OCI-LY7 (cell line): ENCODE measurements at regions of chr6 and their contacts with region 1.

Region 1: DNA sequence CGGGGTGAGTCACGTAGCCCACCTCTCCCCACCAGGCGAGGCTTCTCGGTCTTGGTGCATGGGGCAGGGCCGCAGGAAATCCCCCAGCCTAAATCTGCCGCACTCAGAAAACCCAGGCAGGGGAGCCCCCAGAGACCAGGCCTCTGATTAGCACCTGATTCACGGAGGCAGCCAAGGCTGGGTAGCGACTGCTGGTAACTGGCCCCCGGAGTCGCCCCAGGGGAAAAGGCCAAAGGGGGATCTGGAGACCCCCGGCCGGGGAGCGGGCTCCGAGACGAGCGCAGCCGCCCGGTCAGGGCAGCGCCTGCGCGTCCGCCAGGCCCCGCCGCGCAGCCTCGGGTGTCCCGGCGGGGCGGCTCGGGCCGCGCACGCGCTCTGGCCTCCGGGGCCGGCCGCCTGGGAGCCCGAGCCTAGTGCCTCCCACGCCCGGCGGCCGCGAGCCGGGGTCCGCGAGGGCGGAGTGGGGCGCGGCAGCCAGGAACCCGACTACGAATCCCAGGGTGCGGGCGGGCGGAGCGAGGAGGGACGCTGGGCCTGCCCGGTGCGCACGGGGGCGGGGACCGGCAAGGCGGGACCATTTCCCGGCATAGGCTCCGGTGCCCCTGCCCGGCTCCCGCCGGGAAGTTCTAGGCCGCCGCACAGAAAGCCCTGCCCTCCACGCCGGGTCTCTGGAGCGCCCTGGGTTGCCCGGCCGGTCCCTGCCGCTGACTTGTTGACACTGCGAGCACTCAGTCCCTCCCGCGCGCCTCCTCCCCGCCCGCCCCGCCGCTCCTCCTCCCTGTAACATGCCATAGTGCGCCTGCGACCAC is at the start of gene DUSP22:
- DNase-seq: peak; percentile 87
- H3K4me3 ChIP-seq: peak within 1 kb of the TSS; percentile 80
- H3K27ac ChIP-seq: peak within 1 kb of the TSS; percentile 88
- H3K4me1 ChIP-seq: peaks cover 65% of the 10 kb centered on the region
- CTCF ChIP-seq: no peak
- total RNA-seq, gene DUSP22: 133 and 149 TPM in 2 replicates

Region 2: GRCh38 chr6:188821-189655 is 102.9 kb before region 1 on chr6:
- CTCF ChIA-PET with region 1: no interaction called
- POLR2A ChIA-PET with region 1: interaction called, 9 read pairs
- intact Hi-C with region 1: loop called (anchors 2 kb)
- DNase-seq: peak; percentile 89
- H3K4me3 ChIP-seq: no peak overlapping the region
- H3K27ac ChIP-seq: peak overlapping the region; percentile 24
- H3K4me1 ChIP-seq: peaks cover 87% of the 10 kb centered on the region
- CTCF ChIP-seq: peak; percentile 98

Region 3: DNA sequence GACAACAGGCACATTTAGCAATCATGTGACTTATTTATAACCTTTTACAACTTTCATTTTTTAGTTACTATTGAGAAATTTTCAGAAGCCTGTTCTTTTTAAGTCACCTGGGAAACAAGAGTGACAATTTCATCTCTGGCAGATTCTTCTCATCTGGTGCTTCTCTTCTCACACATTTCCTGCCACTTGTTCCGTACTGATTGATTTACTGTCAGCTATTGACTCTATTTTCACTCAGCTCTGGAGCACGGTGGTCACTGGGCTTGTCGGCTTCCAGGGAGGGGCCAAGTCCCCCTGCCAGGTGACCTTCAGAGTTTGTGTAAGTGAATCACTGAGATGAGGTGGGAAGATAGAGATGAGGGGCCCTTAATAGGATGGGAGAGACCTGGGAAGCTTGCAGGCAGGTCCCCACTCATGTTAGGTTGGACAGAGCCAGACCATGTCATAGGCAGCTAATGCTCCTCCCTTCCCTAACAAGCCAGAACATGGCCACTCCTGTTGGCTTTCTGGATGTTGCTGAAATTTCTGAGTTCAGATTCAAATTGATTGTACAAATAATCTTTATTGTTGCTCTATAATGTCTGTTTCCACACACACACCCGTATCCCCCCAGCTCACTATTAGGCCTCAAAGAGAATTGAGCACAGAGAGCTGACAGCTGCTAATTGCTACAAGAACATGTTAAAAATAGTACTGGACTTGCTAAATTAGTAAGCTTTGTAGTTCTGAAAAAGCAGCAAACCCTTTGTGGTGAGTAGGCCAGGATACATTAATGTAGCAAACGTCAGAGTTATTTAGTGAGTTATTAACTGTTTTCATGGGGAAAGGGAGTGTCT is 13.7 kb after region 1 on chr6:
- CTCF ChIA-PET with region 1: interaction called, 10 read pairs
- POLR2A ChIA-PET with region 1: interaction called, 98 read pairs
- intact Hi-C with region 1: no loop called
- DNase-seq: peak; percentile 74
- H3K4me3 ChIP-seq: peak overlapping the region; percentile 2
- H3K27ac ChIP-seq: peak overlapping the region; percentile 71
- H3K4me1 ChIP-seq: peaks cover 62% of the 10 kb centered on the region
- CTCF ChIP-seq: no peak

Region 4: GRCh38 chr6:319177-320131 is 27.6 kb after region 1 on chr6:
- CTCF ChIA-PET with region 1: interaction called, 6 read pairs
- POLR2A ChIA-PET with region 1: interaction called, 98 read pairs
- intact Hi-C with region 1: loop called (anchors 1 kb)
- DNase-seq: no peak
- H3K4me3 ChIP-seq: no peak overlapping the region
- H3K27ac ChIP-seq: no peak overlapping the region
- H3K4me1 ChIP-seq: peaks cover 100% of the 10 kb centered on the region
- CTCF ChIP-seq: no peak

Region 5: DNA sequence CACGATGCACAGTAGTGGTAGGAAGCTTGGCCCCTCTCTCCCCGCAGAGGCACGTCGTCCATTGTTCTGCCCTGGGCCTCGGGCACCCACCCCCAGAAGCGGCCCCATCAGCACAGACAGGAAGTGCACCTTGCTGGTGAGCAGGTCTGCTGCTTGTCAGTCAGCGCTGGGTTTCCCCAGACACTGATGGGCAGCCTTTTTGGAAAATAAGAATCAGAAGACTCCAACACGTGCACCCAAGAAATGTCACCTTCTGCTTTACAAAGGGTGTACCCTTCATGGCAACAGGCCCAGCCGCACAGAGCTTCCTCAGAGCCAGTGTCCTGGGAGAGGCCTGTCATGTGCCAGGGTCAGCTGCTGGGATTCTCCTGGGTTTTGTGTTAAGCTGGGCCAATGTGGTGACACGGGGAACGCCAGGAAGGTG is 64.9 kb after region 1 on chr6:
- CTCF ChIA-PET with region 1: no interaction called
- POLR2A ChIA-PET with region 1: interaction called, 17 read pairs
- intact Hi-C with region 1: no loop called
- DNase-seq: peak; percentile 83
- H3K4me3 ChIP-seq: peak overlapping the region; percentile 10
- H3K27ac ChIP-seq: peak overlapping the region; percentile 86
- H3K4me1 ChIP-seq: peaks cover 100% of the 10 kb centered on the region
- CTCF ChIP-seq: no peak